Heart left ventricle (tissue), 16 donors: ENCODE measurements at regions of chr4 and their contacts with region 1.

Region 1: DNA sequence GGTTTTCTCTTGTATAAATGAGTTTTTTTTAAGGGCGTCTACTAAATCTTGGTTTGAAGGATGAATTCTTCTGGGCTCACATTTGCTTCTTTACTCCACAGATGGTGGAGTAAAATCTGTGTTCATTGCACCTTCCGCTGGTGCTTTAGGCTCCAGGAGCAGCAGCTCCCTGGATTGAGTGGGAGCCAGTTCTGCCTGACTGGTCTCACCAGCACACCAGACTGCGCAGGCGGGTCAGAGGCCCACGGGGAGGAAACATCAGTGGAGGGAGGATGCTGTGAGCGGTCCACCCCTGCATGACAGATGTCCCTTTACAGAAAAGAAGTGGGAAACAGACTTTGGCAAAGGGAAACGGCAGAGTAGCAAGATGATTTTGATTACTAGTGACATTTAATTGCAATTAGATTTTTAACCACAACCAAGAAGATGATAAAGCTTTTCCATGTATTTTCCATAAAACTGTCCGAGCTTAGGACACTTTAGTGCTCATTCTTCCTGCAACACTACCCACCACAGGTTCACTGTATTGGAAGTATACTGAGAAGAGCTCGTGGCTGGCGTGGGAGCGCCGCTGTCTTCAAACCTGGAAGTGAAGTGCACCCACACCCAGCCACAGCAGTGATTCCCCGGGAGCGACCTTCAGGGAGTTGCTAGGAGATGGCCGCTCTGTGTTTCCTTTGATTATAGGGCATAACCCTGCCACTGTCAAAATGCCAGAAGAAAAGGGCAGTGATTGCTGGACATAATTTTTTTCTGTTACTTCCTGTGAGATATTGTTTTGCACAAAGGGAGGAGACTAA is 95.2 kb downstream of the SORBS2 start:
- DNase-seq: peak in 4 of 5 donors; percentile 45 to 73 (median 50)
- ATAC-seq: peak; percentile 43 to 79 (median 70)
- H3K4me3 ChIP-seq: peak overlapping the region in 5 of 12 donors; percentile 6 to 23 (median 19)
- H3K27ac ChIP-seq: peak overlapping the region in 11 of 12 donors; percentile 38 to 86 (median 63)
- H3K4me1 ChIP-seq: peaks cover 3 to 88% (median 46%) of the 10 kb centered on the region in 12 donors
- H3K27me3 ChIP-seq: no peaks in the 10 kb centered on the region
- CTCF ChIP-seq: no peak
- POLR2A ChIP-seq: no peak

Region 2: DNA sequence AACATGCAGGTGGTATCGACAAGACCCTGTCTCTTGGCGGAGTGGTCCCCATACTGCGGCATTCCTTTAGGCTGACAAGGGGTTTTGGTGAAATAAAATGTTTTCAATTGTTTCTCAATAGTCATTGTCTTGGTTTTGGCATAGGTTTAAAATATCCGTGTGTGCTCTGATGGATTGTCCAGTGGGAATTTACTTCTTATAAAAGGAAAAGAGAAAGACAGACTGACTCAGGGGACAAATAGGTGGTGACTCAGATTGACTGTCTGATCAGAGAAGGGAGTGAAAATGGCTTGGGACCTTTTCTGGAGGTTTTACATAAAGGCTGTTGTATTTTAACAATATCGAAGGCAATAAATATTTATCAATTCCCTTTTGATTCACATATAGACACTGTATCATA is 34.5 kb before region 1 on chr4:
- intact Hi-C with region 1: loop called in 1 of 10 experiments (anchors 5 kb)
- DNase-seq: no peak
- ATAC-seq: peak in 1 of 4 donors; percentile 22
- H3K4me3 ChIP-seq: no peak overlapping the region
- H3K27ac ChIP-seq: peak overlapping the region in 11 of 12 donors; percentile 3 to 83 (median 50)
- H3K4me1 ChIP-seq: peaks cover 0 to 78% (median 27%) of the 10 kb centered on the region in 12 donors
- H3K27me3 ChIP-seq: no peaks in the 10 kb centered on the region
- CTCF ChIP-seq: no peak
- POLR2A ChIP-seq: no peak

Region 3: DNA sequence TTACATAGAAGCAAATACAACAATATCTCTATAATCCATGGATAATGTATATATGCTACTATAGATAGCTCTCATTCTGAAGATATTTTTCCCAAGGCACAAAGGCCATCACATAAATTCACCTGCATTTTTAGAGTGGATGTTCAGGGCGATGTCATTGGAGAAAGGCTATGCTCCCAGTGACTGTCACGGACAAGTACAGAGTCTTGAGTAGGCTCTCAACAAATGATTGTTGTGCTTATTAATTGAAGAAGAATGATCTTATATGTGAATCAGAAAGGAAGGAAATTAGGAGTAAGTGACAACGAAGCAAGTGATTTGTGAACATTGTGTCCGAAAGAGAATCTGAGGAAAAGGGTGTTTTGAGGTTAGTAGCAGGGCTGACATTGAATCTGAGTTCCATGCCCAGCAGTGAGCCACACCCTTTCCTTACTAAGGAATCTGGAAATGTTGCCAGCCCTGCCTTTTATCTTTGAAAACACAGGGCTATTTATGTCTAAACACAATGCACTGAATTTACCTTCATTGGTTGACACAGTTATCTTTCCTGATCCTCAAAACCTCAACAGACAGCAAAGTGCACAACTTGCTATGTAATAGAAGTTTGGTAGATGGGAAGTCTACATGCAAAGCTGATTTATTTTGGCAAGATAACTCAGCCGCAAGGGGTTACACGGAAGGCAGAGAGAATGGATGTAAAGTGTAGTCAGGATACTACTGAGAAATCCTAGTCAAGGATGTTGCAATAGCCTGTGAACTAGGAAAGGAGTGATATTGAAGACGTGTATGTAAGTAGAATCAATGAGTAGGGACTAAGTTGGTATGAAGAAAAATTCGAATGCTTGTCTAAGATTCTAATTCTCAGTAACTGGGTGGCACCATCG is 44.8 kb after region 1 on chr4:
- intact Hi-C with region 1: loop called in 2 of 10 experiments (anchors 2 to 5 kb)
- DNase-seq: no peak
- ATAC-seq: peak; percentile 75 to 81 (median 77)
- H3K4me3 ChIP-seq: peak overlapping the region in 6 of 12 donors; percentile 4 to 26 (median 6)
- H3K27ac ChIP-seq: peak overlapping the region; percentile 24 to 81 (median 56)
- H3K4me1 ChIP-seq: peaks cover 3 to 97% (median 37%) of the 10 kb centered on the region in 12 donors
- H3K27me3 ChIP-seq: no peaks in the 10 kb centered on the region
- CTCF ChIP-seq: no peak
- POLR2A ChIP-seq: no peak